PC-9 (cell line): ENCODE measurements at regions of chr9 and their contacts with region 1.

Region 1: GRCh38 chr9:133347985-133348717 is at the starts of genes MED22 and RPL7A:
- DNase-seq: peak; percentile 87 to 93
- H3K4me3 ChIP-seq: peak within 1 kb of the TSS; percentile 99
- H3K27ac ChIP-seq: peak within 1 kb of the TSS; percentile 97
- H3K4me1 ChIP-seq: peaks cover 17% of the 10 kb centered on the region
- H3K27me3 ChIP-seq: no peaks in the 10 kb centered on the region
- CTCF ChIP-seq: 0 out of 2 replicates have a peak, but pooled peaks have one; percentile 17
- total RNA-seq, gene MED22: 38.2 and 38.7 TPM in 2 replicates
- total RNA-seq, gene RPL7A: 2,381 and 2,937 TPM in 2 replicates

Region 2: GRCh38 chr9:132768932-132769905 is 578.9 kb before region 1 on chr9:
- CTCF ChIA-PET with region 1: no interaction called
- POLR2A ChIA-PET with region 1: interaction called, 21 read pairs
- intact Hi-C with region 1: no loop called
- DNase-seq: peak in 1 of 2 experiments; percentile 47
- H3K4me3 ChIP-seq: peak overlapping the region; percentile 71
- H3K27ac ChIP-seq: no peak overlapping the region
- H3K4me1 ChIP-seq: no peaks in the 10 kb centered on the region
- H3K27me3 ChIP-seq: no peaks in the 10 kb centered on the region
- CTCF ChIP-seq: peak; percentile 47; the same call in 1 of the 2 replicates

Region 3: GRCh38 chr9:133335878-133336811 is 12.0 kb before region 1 on chr9 and contains the start of gene SURF6:
- CTCF ChIA-PET with region 1: interaction called, 3 read pairs
- POLR2A ChIA-PET with region 1: interaction called, 3 read pairs
- intact Hi-C with region 1: loop called (anchors 1 kb)
- DNase-seq: peak; percentile 76 to 92
- H3K4me3 ChIP-seq: peak within 1 kb of the TSS; percentile 94
- H3K27ac ChIP-seq: peak within 1 kb of the TSS; percentile 48
- H3K4me1 ChIP-seq: peaks cover 15% of the 10 kb centered on the region
- H3K27me3 ChIP-seq: no peaks in the 10 kb centered on the region
- CTCF ChIP-seq: no peak
- total RNA-seq, gene SURF6: 21.2 and 29.8 TPM in 2 replicates

Region 4: GRCh38 chr9:133375724-133376654 is 27.8 kb after region 1 on chr9 and contains the starts of genes STKLD1 and SURF4:
- CTCF ChIA-PET with region 1: no interaction called
- POLR2A ChIA-PET with region 1: interaction called, 5 read pairs
- intact Hi-C with region 1: loop called (anchors 1 kb)
- DNase-seq: peak; percentile 80 to 99
- H3K4me3 ChIP-seq: peak within 1 kb of the TSS; percentile 69
- H3K27ac ChIP-seq: peak within 1 kb of the TSS; percentile 59; the same call in 1 of the 2 replicates
- H3K4me1 ChIP-seq: peaks cover 36% of the 10 kb centered on the region
- H3K27me3 ChIP-seq: no peaks in the 10 kb centered on the region
- CTCF ChIP-seq: no peak
- total RNA-seq, gene STKLD1: 3.1 and 4.8 TPM in 2 replicates
- total RNA-seq, gene SURF4: 199 and 233 TPM in 2 replicates